ENCODE measurements at regions of chr14 and their contacts with region 1.

Region 1: DNA sequence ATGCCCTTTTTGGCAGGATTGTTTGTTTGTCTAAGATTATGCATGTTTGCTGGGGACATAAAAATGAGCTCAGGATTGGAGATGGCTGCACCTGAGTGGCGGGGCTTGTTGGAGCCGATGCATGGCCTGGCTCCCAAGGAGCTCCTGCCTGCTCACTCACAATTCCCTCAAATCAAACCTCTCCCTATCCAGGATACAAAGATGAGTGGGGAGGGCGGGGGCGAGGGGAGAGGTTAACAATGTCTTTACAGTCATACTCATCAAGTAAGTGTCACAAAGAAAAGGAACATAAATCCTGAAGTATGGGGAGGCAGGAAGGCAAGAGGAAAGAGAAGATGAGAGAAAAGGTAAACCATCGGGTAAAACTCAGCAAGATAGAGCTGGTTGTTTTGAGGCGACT is 104.0 kb upstream of the COCH start:
- DNase-seq: no peak
- ATAC-seq: no peak
- H3K4me3 ChIP-seq: no peak overlapping the region
- H3K27ac ChIP-seq: no peak overlapping the region
- H3K4me1 ChIP-seq: no peaks in the 10 kb centered on the region
- H3K27me3 ChIP-seq: peaks cover 30% of the 10 kb centered on the region
- CTCF ChIP-seq: no peak
- POLR2A ChIP-seq: no peak
- RAD21 ChIP-seq: no peak

Region 2: GRCh38 chr14:30395065-30395464 is 375.3 kb before region 1 on chr14:
- CTCF ChIA-PET with region 1: no interaction called
- POLR2A ChIA-PET with region 1: no interaction called
- dilution Hi-C with region 1: no loop called
- in situ Hi-C with region 1: no loop called
- intact Hi-C with region 1: no loop called
- DNase-seq: no peak
- ATAC-seq: no peak
- H3K4me3 ChIP-seq: no peak overlapping the region
- H3K27ac ChIP-seq: no peak overlapping the region
- H3K4me1 ChIP-seq: no peaks in the 10 kb centered on the region
- H3K27me3 ChIP-seq: no peaks in the 10 kb centered on the region
- CTCF ChIP-seq: no peak
- POLR2A ChIP-seq: no peak
- RAD21 ChIP-seq: no peak

Region 3: DNA sequence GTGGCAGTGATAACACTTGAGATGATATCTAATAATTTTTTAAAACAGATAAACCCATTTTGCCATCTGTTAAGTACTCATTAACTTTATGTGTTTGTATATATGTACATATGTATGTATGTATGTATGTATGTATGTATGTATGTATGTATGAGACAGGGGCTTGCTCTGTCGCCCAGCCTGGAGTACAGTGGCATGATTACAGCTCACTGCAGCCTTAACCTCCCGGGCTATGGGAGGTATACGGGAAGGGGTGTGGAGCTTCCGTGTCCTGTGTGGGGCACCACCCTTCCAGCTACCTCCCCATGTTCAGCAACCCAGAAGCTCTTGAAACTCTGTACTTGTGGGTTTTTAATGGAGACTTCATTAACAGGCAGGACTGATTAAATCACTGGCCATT is 31.4 kb before region 1 on chr14:
- CTCF ChIA-PET with region 1: no interaction called
- POLR2A ChIA-PET with region 1: no interaction called
- dilution Hi-C with region 1: no loop called
- in situ Hi-C with region 1: no loop called
- intact Hi-C with region 1: no loop called
- DNase-seq: no peak
- ATAC-seq: no peak
- H3K4me3 ChIP-seq: no peak overlapping the region
- H3K27ac ChIP-seq: no peak overlapping the region
- H3K4me1 ChIP-seq: no peaks in the 10 kb centered on the region
- H3K27me3 ChIP-seq: no peaks in the 10 kb centered on the region
- CTCF ChIP-seq: no peak
- POLR2A ChIP-seq: no peak
- RAD21 ChIP-seq: no peak

Region 4: DNA sequence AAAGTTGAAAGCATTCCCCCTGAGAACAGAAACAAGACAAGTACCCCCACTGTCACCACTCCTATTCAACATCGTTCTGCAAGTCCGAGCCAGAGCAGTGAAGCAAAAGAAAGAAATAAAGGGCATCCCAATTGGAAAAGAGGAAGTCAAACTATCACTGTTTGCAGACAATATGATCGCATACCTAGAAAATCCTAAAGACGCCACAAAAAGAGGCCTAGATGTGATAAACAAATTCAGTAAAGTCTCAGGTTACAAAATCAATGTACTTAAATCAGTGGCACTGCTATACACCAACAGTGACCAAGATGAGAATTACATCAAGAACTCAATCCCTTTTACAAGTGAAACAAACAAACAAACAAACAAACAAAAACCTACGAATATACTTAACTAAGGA is 16.3 kb after region 1 on chr14:
- CTCF ChIA-PET with region 1: no interaction called
- POLR2A ChIA-PET with region 1: no interaction called
- dilution Hi-C with region 1: no loop called
- in situ Hi-C with region 1: no loop called
- intact Hi-C with region 1: loop called (anchors 2 kb)
- DNase-seq: no peak
- ATAC-seq: no peak
- H3K4me3 ChIP-seq: no peak overlapping the region
- H3K27ac ChIP-seq: no peak overlapping the region
- H3K4me1 ChIP-seq: no peaks in the 10 kb centered on the region
- H3K27me3 ChIP-seq: peaks cover 3% of the 10 kb centered on the region; the same call in 1 of the 2 replicates
- CTCF ChIP-seq: no peak
- POLR2A ChIP-seq: no peak
- RAD21 ChIP-seq: no peak